ENCODE measurements at regions of chr17 and their contacts with region 1.

Region 1: DNA sequence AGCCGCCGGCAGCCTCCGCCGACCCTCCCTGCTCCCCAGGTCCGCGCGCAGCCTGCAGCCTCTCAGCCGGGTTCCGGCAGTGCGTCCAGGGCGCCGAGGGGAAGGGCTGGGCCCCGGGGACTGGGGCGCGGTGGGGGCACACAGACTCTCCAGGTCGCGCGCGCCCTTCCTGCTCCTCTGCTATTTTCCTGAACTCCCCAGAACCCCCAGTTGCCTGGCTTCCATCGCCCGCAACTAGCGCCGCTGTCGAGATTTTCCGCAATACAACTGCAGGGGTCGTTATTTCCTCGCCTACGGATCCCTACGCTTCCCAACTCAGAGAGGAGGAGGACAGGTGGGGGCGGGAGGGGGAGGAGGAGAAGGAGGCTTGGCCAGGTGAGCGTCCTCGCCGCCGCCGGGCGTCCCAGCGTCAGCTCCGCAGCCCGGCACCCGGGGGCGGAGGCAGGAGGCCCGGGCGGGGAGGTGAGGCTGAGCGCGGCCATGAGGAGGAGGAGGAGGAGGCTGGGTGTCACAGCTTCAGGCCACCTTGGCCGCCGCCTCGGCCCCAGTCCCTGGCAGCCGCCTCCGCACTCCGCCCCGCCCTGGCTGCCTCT is at the start of gene CA10:
- DNase-seq: no peak
- ATAC-seq: no peak
- H3K4me3 ChIP-seq: no peak within 1 kb of the TSS
- H3K27ac ChIP-seq: no peak within 1 kb of the TSS
- H3K4me1 ChIP-seq: peaks cover 0 to 7% (median 0%) of the 10 kb centered on the region in 9 donors
- H3K27me3 ChIP-seq: peaks cover 17 to 92% (median 65%) of the 10 kb centered on the region in 7 donors
- CTCF ChIP-seq: no peak
- total RNA-seq, gene CA10: not detected

Region 2: GRCh38 chr17:52207796-52208195 is 49.2 kb after region 1 on chr17:
- intact Hi-C with region 1: loop called in 1 of 10 experiments (anchors 5 kb)
- DNase-seq: no peak
- ATAC-seq: no peak
- H3K4me3 ChIP-seq: no peak overlapping the region
- H3K27ac ChIP-seq: no peak overlapping the region
- H3K4me1 ChIP-seq: no peaks in the 10 kb centered on the region
- H3K27me3 ChIP-seq: no peaks in the 10 kb centered on the region
- CTCF ChIP-seq: no peak